ENCODE measurements at regions of chr2 and their contacts with region 1.

Region 1: DNA sequence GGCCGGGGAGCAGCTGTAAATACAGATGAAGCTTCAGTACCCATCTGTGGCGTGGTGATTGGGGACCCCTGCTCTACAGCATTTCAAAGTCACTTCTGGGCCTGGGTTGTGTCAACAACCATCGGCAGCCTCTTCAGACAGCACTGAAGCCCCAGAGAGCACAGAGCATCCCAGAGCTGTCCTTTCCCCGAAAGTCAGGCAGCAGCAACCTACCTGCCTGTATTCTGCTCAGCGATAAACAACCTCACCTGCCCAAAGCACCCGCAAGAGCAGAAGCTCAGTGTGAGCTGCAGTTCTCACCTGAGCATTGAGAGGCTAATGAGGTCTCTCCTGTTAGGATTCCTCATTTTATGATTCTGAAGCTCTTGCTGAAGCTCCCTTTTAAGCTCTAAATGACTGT is 19.3 kb downstream of the TRABD2A start:
- DNase-seq: no peak
- H3K4me3 Mint-ChIP-seq: no peak overlapping the region
- H3K27ac Mint-ChIP-seq: peak overlapping the region; percentile 86
- H3K4me1 Mint-ChIP-seq: peaks cover 94% of the 10 kb centered on the region
- H3K27me3 Mint-ChIP-seq: no peaks in the 10 kb centered on the region

Region 2: DNA sequence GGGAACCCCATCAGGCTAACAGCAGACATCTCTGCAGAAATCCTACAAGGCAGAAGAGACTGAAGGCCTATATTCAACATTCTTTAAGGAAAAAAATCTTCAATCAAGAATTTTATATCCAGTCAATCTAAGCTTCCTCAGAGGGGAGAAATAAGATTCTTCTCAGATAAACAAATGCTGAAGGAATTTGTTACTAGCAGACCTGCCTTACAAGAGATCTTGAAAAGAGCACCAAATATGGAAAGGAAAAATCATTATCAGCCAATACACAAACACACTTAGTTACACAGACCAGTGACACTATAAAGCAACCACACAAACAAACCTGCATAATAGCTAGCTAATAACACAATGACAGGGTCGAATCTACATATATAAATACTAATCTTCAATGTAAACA is 499.0 kb before region 1 on chr2:
- CTCF ChIA-PET with region 1: no interaction called
- POLR2A ChIA-PET with region 1: no interaction called
- DNase-seq: no peak
- H3K4me3 Mint-ChIP-seq: no peak overlapping the region
- H3K27ac Mint-ChIP-seq: no peak overlapping the region
- H3K4me1 Mint-ChIP-seq: no peaks in the 10 kb centered on the region
- H3K27me3 Mint-ChIP-seq: peaks cover 24% of the 10 kb centered on the region

Region 3: GRCh38 chr2:84846041-84846663 is 15.4 kb before region 1 on chr2:
- CTCF ChIA-PET with region 1: interaction called, 21 read pairs
- POLR2A ChIA-PET with region 1: no interaction called
- DNase-seq: peak; percentile 76
- H3K4me3 Mint-ChIP-seq: peak overlapping the region; percentile 43
- H3K27ac Mint-ChIP-seq: peak overlapping the region; percentile 95
- H3K4me1 Mint-ChIP-seq: peaks cover 91% of the 10 kb centered on the region
- H3K27me3 Mint-ChIP-seq: no peaks in the 10 kb centered on the region

Region 4: DNA sequence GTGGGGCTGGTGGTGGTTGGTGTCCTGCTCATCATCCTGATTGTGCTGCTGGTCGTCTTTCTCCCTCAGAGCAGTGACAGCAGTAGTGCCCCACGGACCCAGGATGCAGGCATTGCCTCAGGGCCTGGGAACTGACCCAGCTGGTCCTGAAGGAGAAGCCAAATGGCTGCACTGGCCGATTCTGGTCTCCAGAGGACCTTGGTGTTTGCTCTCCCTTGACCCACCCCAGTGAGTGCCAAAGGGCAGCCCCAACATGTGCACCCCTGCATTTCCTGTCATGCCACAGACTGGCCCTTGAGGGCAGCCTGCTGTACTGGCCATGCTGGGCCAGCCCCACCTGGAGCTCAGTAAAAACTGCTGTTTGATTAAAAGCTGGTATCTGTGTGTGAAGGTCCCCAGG is 731.5 kb after region 1 on chr2:
- CTCF ChIA-PET with region 1: no interaction called
- POLR2A ChIA-PET with region 1: no interaction called
- DNase-seq: no peak
- H3K4me3 Mint-ChIP-seq: no peak overlapping the region
- H3K27ac Mint-ChIP-seq: no peak overlapping the region
- H3K4me1 Mint-ChIP-seq: peaks cover 46% of the 10 kb centered on the region
- H3K27me3 Mint-ChIP-seq: no peaks in the 10 kb centered on the region